ENCODE measurements at regions of chr20 and their contacts with region 1.

Region 1: DNA sequence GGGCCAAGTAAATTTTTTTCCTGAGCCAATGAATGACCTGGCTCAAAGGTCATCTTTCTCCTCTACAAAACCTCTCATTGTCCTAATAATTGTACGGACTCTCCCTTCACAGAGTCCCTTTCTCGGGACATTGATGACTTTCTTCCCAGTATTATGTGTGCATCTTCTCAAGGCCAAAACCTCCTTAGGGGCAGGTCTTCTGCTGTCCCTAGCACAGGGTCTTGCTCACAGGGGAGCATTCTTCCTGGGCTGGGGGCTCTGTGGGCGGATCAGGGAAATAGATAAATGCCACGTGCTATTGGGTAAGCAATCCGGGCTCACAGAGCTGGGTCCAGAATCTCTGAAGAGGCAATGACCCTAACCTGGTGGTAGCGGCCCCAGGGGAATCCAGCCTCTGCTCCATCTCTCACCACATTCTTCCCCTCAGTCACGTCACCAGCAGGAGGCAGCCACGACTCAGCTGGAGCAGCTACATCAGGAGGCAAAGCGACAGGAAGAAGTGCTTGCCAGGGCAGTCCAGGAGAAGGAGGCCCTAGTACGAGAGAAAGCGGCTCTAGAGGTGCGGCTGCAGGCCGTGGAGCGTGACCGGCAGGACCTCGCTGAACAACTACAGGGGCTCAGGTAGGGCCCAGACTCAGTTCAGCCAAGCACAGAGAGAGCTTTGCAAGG is 23.5 kb downstream of the CEP250 start:
- DNase-seq: peak; percentile 58
- ATAC-seq: peak; percentile 68
- H3K4me3 ChIP-seq: no peak overlapping the region
- H3K4me3 Mint-ChIP-seq: no peak overlapping the region
- H3K27ac ChIP-seq: peak overlapping the region in 1 of 2 donors; percentile 18
- H3K27ac Mint-ChIP-seq: peak overlapping the region; percentile 48
- H3K4me1 ChIP-seq: peaks cover 0 to 10% of the 10 kb centered on the region in 2 donors
- H3K4me1 Mint-ChIP-seq: peaks cover 6% of the 10 kb centered on the region
- H3K27me3 ChIP-seq: no peaks in the 10 kb centered on the region
- H3K27me3 Mint-ChIP-seq: no peaks in the 10 kb centered on the region
- CTCF ChIP-seq: peak; percentile 4

Region 2: DNA sequence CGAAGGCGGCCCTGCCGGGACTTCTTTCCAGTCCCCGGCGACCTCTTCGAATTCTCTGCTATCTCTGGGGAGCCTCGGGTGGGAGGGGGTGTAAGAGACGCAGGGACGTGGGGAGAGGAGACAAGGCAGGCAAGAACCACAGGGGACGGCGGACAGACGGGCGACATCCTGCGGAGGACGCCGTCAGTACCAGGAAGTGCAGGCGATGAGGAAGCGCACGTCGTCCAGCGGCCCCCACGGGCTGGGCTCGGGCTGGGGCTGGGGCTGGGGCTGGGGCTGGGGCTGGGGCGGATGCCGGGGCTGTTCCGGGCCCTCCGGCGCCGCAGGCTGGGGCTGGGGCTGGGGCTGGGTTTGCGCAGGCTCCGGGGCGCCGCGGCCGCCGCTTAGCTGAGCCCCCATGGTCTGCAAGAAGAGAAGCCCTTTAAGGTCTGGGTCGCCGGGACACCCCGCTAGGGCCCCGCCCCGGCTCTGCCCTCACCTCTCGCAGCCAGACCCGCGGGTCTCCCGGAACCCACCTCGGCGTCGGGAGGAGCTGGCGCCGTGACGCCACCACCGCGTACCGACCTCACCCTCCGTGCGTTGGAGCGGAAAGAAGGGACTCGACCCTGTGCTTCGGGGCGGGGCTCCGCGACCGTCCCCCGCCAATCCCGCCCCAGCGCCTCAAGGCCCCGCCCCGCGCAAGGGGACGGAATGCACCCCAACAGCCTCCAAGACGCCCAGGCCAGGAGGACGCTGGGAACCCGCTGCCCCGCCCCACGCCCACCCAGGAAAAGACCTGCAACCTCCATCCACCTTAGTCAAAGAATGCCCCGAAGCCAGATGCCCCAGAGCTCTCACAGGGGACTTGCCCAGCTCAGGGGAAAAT is 201.2 kb before region 1 on chr20 and contains the start of gene MMP24OS:
- CTCF ChIA-PET with region 1: no interaction called
- POLR2A ChIA-PET with region 1: no interaction called
- intact Hi-C with region 1: no loop called
- DNase-seq: peak; percentile 95
- ATAC-seq: peak; percentile 90
- H3K4me3 ChIP-seq: peak within 1 kb of the TSS; percentile 70 to 86 (median 77)
- H3K4me3 Mint-ChIP-seq: peak within 1 kb of the TSS; percentile 94
- H3K27ac ChIP-seq: peak within 1 kb of the TSS; percentile 92 to 96
- H3K27ac Mint-ChIP-seq: peak within 1 kb of the TSS; percentile 99
- H3K4me1 ChIP-seq: peaks cover 14 to 21% of the 10 kb centered on the region in 2 donors
- H3K4me1 Mint-ChIP-seq: peaks cover 20% of the 10 kb centered on the region
- H3K27me3 ChIP-seq: no peaks in the 10 kb centered on the region
- H3K27me3 Mint-ChIP-seq: no peaks in the 10 kb centered on the region
- CTCF ChIP-seq: peak; percentile 22
- total RNA-seq, gene MMP24OS: 57.0 and 66.9 TPM in 2 replicates

Region 3: GRCh38 chr20:35404614-35405259 is 74.2 kb before region 1 on chr20:
- CTCF ChIA-PET with region 1: no interaction called
- POLR2A ChIA-PET with region 1: no interaction called
- intact Hi-C with region 1: no loop called
- DNase-seq: peak; percentile 67
- ATAC-seq: peak; percentile 93
- H3K4me3 ChIP-seq: no peak overlapping the region
- H3K4me3 Mint-ChIP-seq: no peak overlapping the region
- H3K27ac ChIP-seq: peak overlapping the region in 1 of 2 donors; percentile 56
- H3K27ac Mint-ChIP-seq: peak overlapping the region; percentile 10
- H3K4me1 ChIP-seq: peaks cover 9 to 12% of the 10 kb centered on the region in 2 donors
- H3K4me1 Mint-ChIP-seq: peaks cover 18% of the 10 kb centered on the region
- H3K27me3 ChIP-seq: no peaks in the 10 kb centered on the region
- H3K27me3 Mint-ChIP-seq: no peaks in the 10 kb centered on the region
- CTCF ChIP-seq: no peak

Region 4: DNA sequence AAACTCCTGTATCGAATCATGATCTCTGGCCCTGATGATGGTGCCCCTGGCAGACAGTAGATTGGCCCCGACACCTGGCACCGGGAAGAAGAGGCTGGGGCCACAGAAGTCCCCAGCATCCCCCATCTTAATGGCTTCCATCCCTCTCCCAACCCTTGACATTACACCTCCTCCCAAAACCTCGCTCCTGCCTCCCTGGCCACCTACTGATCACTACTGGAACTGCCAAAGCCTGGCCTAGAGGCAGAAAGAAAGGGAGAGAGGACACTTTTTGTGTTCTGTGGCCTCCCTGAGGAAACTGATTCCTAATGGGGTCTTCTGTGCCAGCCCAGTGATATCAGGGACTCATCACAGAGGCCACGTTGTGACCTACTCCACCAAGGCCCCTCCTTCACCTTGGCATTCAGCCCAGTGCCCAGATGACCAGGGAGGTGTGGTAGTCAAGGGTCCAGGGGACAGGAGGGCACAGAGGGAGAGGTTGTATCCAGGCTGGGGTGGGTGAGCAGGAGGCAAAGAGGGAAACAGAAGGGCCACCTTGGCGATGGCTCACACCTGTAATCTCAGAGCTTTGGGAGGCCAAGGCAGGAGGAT is 44.5 kb after region 1 on chr20:
- CTCF ChIA-PET with region 1: no interaction called
- POLR2A ChIA-PET with region 1: no interaction called
- intact Hi-C with region 1: loop called (anchors 1 kb)
- DNase-seq: no peak
- ATAC-seq: peak; percentile 41
- H3K4me3 ChIP-seq: no peak overlapping the region
- H3K4me3 Mint-ChIP-seq: no peak overlapping the region
- H3K27ac ChIP-seq: no peak overlapping the region
- H3K27ac Mint-ChIP-seq: no peak overlapping the region
- H3K4me1 ChIP-seq: no peaks in the 10 kb centered on the region
- H3K4me1 Mint-ChIP-seq: no peaks in the 10 kb centered on the region
- H3K27me3 ChIP-seq: no peaks in the 10 kb centered on the region
- H3K27me3 Mint-ChIP-seq: no peaks in the 10 kb centered on the region
- CTCF ChIP-seq: peak; percentile 59